ENCODE measurements at regions of chr9 and their contacts with region 1.

Region 1: DNA sequence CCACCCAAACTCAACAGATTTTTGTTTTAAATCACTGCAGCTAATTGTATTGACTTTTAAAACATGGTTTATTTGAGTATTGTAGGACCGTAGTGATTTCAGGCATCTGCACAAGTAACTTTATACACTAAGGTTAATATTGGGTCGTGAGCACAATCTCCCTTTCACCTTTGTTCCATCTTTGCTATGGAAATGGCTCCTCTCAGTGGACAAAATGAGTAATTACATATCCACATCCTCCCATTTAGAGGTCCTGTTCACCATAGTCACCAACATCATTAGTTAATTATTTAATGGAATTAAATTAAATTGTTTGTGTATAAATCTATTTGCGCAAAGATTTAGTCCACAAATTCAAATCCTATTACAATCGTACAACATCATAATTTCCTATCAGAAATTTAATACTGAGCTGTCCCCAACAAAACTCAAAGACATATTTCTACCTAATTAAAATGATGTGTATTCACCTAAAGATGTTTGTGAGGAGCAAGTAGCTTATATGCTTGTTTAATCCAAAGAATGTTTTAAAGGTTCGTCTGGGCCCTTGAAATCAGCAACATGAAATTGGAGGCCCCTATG is 173.0 kb upstream of the DAPK1 start:
- DNase-seq: peak; percentile 58
- ATAC-seq: no peak
- H3K4me3 ChIP-seq: no peak overlapping the region
- H3K27ac ChIP-seq: no peak overlapping the region
- H3K4me1 ChIP-seq: no peaks in the 10 kb centered on the region
- H3K27me3 ChIP-seq: no peaks in the 10 kb centered on the region
- CTCF ChIP-seq: peak; percentile 66

Region 2: DNA sequence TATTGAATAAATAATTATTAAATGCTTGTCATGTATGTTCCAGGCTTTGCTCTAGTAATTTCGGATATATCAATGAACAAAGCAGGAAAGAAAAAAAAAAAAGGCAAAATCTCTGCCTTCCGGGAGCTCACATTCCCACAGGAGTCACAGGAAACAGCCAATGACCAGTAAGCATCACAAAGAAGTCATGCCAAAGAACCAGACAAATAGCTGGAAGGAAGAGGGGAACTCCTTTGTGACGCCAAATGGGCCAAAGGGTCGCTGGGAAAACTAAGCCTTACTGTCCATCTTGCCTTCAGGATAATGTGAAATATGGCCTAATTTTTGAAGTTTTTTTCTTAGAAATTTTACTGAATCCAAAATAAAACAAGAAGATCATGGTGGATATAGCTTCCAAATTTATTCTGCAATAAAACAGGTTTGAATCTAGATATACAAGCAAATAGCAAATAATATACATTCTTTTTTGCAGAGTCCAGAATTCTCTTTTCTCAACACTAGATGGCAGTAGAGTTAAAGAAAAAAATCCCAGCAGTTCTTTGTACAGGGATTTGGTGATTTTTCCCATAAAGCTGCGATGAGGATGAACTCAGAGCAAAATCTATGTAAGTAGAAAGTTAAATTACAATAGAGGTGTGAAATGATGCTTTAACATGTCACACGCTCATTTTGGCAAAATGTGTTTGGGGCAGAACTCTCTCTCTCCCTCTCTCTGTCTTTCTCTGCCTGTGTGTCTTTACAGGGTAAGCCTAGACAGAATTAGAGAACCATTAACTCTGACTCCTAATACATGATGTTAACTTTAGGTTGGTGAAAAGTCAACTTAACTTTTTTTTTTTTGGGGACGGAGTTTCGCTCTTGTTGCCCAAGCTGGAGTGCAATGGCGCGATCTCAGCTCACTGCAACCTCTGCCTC is 910.5 kb before region 1 on chr9:
- CTCF ChIA-PET with region 1: interaction called, 3 read pairs
- POLR2A ChIA-PET with region 1: no interaction called
- intact Hi-C with region 1: loop called (anchors 1 kb)
- DNase-seq: peak; percentile 40
- ATAC-seq: no peak
- H3K4me3 ChIP-seq: no peak overlapping the region
- H3K27ac ChIP-seq: no peak overlapping the region
- H3K4me1 ChIP-seq: no peaks in the 10 kb centered on the region
- H3K27me3 ChIP-seq: peaks cover 12% of the 10 kb centered on the region; the same call in 1 of the 2 replicates
- CTCF ChIP-seq: peak; percentile 72

Region 3: GRCh38 chr9:86434039-86434726 is 890.5 kb before region 1 on chr9:
- CTCF ChIA-PET with region 1: no interaction called
- POLR2A ChIA-PET with region 1: no interaction called
- intact Hi-C with region 1: loop called (anchors 1 kb)
- DNase-seq: peak; percentile 56
- ATAC-seq: 0 out of 2 replicates have a peak, but pooled peaks have one; percentile 40
- H3K4me3 ChIP-seq: no peak overlapping the region
- H3K27ac ChIP-seq: no peak overlapping the region
- H3K4me1 ChIP-seq: peaks cover 5% of the 10 kb centered on the region; the same call in 1 of the 2 replicates
- H3K27me3 ChIP-seq: no peaks in the 10 kb centered on the region
- CTCF ChIP-seq: peak; percentile 78

Region 4: GRCh38 chr9:86486891-86487837 is 837.5 kb before region 1 on chr9:
- CTCF ChIA-PET with region 1: no interaction called
- POLR2A ChIA-PET with region 1: no interaction called
- intact Hi-C with region 1: loop called (anchors 1 kb)
- DNase-seq: peak; percentile 44
- ATAC-seq: no peak
- H3K4me3 ChIP-seq: no peak overlapping the region
- H3K27ac ChIP-seq: no peak overlapping the region
- H3K4me1 ChIP-seq: no peaks in the 10 kb centered on the region
- H3K27me3 ChIP-seq: no peaks in the 10 kb centered on the region; the same call in 1 of the 2 replicates
- CTCF ChIP-seq: peak; percentile 65

Region 5: GRCh38 chr9:86948074-86948929 is 376.4 kb before region 1 on chr9:
- CTCF ChIA-PET with region 1: no interaction called
- POLR2A ChIA-PET with region 1: no interaction called
- intact Hi-C with region 1: loop called (anchors 5 kb)
- DNase-seq: peak; percentile 65
- ATAC-seq: peak; percentile 65
- H3K4me3 ChIP-seq: peak overlapping the region; percentile 40
- H3K27ac ChIP-seq: no peak overlapping the region
- H3K4me1 ChIP-seq: peaks cover 3% of the 10 kb centered on the region; the same call in 1 of the 2 replicates
- H3K27me3 ChIP-seq: peaks cover 27% of the 10 kb centered on the region
- CTCF ChIP-seq: peak; percentile 60

Region 6: DNA sequence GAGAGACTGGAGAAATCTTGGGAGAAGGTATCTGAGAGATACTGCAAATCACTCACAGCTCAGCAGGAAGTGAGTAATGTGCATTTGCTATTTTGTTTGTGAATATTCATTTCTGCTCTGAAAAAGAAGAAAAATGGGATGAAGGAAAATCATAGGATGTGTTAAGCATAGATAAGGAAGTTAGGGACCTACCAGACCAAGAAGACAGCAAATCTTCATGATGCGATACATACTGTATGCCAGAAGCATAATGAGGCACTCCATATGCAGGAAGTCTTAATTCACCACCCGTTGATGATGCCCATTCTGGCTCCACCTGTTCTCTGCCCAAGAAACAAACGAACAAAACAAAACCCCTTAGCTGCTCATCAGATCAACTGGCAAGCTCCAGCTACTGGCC is 166.8 kb after region 1 on chr9:
- CTCF ChIA-PET with region 1: no interaction called
- POLR2A ChIA-PET with region 1: no interaction called
- intact Hi-C with region 1: no loop called
- DNase-seq: no peak
- ATAC-seq: no peak
- H3K4me3 ChIP-seq: no peak overlapping the region
- H3K27ac ChIP-seq: no peak overlapping the region
- H3K4me1 ChIP-seq: no peaks in the 10 kb centered on the region
- H3K27me3 ChIP-seq: 0 out of 2 replicates have a peak, but pooled peaks cover 4% of the 10 kb centered on the region
- CTCF ChIP-seq: no peak

Measured in PC-3 (cell line).